Activated CD4-positive, alpha-beta T cell treated with anti-CD3 and anti-CD28 coated beads for 36 hours (primary cell): ENCODE measurements at regions of chr7 and their contacts with region 1.

Region 1: DNA sequence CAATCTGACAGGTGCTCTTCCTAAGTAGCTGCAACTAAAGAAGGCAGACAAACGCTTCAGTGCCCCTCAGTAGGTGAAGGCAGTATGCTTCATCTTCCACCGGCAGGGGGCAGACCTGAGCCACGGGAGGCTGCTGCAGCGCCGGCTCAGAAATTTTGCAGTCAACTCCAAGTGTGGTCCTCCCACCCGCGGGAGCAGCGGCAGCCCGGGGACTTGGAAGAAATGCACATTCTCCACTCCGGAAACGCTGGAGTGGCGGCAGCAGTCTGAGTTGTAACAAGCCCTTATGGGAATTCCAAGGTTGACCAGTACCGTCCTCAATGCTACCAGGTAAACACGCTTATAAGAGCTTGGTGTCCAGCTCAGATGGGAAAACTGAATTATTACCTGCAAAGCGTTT is 3.4 kb downstream of the IGFBP3 start:
- DNase-seq: peak; percentile 88
- ATAC-seq: peak; percentile 61
- H3K4me3 Mint-ChIP-seq: no peak overlapping the region
- H3K27ac Mint-ChIP-seq: no peak overlapping the region
- H3K4me1 Mint-ChIP-seq: peaks cover 11% of the 10 kb centered on the region
- H3K27me3 Mint-ChIP-seq: peaks cover 48% of the 10 kb centered on the region

Region 2: DNA sequence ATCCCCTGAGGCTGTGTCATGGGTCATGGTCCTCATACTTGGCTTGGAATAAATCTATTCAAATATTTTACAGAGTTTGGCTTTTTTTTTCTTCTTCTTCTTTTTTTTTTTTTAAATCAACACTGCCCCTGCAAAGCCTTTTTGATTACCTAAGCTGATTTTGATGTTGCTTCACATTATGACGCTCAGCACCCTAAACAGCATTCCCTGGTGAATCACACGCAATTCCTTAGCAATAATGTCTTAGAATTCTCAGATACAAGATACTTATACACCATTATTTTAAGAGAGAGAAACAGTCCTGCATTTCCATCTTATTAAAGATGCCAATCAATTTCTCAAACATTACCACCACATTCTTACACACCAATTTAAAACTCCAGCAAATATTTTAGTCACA is 327.1 kb after region 1 on chr7:
- CTCF ChIA-PET with region 1: no interaction called
- POLR2A ChIA-PET with region 1: no interaction called
- intact Hi-C with region 1: no loop called
- DNase-seq: no peak
- ATAC-seq: no peak
- H3K4me3 Mint-ChIP-seq: no peak overlapping the region
- H3K27ac Mint-ChIP-seq: no peak overlapping the region
- H3K4me1 Mint-ChIP-seq: no peaks in the 10 kb centered on the region
- H3K27me3 Mint-ChIP-seq: peaks cover 4% of the 10 kb centered on the region

Region 3: GRCh38 chr7:46352004-46352954 is 434.6 kb after region 1 on chr7:
- CTCF ChIA-PET with region 1: interaction called, 9 read pairs
- POLR2A ChIA-PET with region 1: no interaction called
- intact Hi-C with region 1: loop called (anchors 1 kb)
- DNase-seq: peak; percentile 33
- ATAC-seq: no peak
- H3K4me3 Mint-ChIP-seq: no peak overlapping the region
- H3K27ac Mint-ChIP-seq: no peak overlapping the region
- H3K4me1 Mint-ChIP-seq: no peaks in the 10 kb centered on the region
- H3K27me3 Mint-ChIP-seq: no peaks in the 10 kb centered on the region

Region 4: DNA sequence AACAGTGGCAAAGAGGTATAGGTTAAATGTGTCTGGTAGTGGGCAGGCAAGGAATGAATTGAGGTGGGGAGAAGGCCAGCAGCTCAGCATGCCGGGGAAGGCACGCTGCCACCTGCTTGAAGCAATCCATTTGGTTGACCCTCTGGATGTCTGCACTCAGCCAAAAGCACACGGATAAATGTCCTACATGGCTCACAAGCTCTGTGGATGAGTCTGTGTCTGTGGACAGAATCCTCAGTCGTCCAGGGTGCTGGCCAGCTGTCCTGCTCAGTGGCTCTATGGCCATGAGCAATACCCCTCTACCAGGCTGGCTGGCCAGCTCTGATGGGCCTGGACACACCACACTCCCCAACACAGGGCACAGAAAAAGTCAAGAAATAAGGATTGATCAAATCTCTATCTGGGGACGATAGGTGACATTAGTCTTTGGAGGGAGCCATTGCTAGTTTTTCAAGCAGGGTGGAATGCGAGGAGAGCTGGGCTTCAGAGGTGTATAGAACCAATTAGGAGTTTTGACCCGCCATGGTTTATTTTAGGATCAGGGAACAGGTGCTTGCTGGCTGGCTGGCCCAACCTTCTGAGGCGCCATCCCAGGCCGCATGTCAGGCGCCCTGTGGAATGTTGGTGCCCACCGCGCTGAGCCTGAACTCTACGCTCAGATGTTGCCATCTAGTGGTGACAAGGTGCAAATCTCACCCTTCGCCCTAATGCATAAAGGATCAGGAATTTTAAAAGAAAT is 1170.8 kb after region 1 on chr7:
- CTCF ChIA-PET with region 1: interaction called, 3 read pairs
- POLR2A ChIA-PET with region 1: no interaction called
- intact Hi-C with region 1: loop called (anchors 1 kb)
- DNase-seq: peak; percentile 44
- ATAC-seq: no peak
- H3K4me3 Mint-ChIP-seq: no peak overlapping the region
- H3K27ac Mint-ChIP-seq: no peak overlapping the region
- H3K4me1 Mint-ChIP-seq: no peaks in the 10 kb centered on the region
- H3K27me3 Mint-ChIP-seq: peaks cover 5% of the 10 kb centered on the region

Region 5: DNA sequence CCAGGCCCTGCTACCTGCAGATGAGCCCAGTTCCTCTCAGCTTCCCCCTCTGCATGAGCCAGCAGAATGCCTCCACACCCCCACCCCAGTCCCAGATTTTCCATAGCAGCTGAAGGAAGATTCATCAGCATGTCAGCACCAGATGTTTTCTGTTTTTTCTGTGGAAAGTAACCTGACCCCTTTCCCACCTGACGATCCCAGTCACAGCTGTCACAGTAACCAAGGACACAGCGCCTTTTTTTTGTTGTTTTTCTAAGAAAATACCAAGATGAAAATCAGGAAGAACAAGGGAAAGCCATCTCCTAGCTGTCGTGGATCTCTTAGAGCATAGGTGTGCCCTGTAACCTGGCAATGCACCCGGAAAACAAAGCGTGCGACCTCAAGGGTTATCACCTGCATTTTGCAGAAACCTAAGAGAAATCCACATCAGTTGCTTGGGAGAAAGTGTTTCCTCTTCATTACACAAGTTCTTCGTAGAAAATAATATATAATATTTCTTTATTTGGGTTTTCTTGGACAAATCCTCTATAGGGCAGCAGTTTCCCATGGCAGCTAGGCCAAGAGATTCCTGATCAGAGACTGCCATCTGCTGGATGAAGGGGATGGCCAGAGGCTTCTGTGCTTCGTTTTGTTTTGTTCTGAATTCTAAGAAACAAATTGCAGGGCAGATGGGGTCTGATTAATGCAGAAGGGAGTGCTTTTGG is 1262.3 kb after region 1 on chr7:
- CTCF ChIA-PET with region 1: no interaction called
- POLR2A ChIA-PET with region 1: no interaction called
- intact Hi-C with region 1: loop called in 1 of 2 experiments (anchors 1 kb)
- DNase-seq: peak; percentile 38
- ATAC-seq: no peak
- H3K4me3 Mint-ChIP-seq: no peak overlapping the region
- H3K27ac Mint-ChIP-seq: no peak overlapping the region
- H3K4me1 Mint-ChIP-seq: no peaks in the 10 kb centered on the region
- H3K27me3 Mint-ChIP-seq: peaks cover 5% of the 10 kb centered on the region

Region 6: GRCh38 chr7:47818796-47819606 is 1901.3 kb after region 1 on chr7:
- CTCF ChIA-PET with region 1: no interaction called
- POLR2A ChIA-PET with region 1: no interaction called
- intact Hi-C with region 1: loop called in 1 of 2 experiments (anchors 5 kb)
- DNase-seq: peak; percentile 75
- ATAC-seq: peak; percentile 44
- H3K4me3 Mint-ChIP-seq: no peak overlapping the region
- H3K27ac Mint-ChIP-seq: no peak overlapping the region
- H3K4me1 Mint-ChIP-seq: no peaks in the 10 kb centered on the region
- H3K27me3 Mint-ChIP-seq: no peaks in the 10 kb centered on the region